Thyroid gland (tissue), 4 donors: ENCODE measurements at regions of chr2 and their contacts with region 1.

Region 1: DNA sequence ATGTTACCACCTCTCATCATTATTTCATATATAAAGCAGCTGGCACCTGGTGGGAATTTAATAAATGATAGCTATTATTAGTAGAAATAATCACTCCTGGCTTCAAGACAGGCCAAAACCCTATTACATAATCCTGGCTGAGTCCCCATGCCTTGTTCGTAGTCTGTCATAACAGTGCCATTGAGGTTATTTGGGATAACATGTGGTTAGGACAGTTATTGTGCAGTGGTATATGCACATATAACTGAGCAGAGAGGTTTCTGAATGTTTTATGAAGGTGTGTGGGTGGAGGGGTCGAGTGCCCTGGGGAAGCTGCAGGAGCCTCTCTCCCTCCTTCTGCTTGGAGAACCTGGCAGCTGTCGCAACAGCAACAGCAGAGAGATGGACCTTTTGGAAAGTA is 162.4 kb upstream of the NABP1 start:
- DNase-seq: no peak
- H3K4me3 ChIP-seq: no peak overlapping the region
- H3K27ac ChIP-seq: no peak overlapping the region
- H3K4me1 ChIP-seq: no peaks in the 10 kb centered on the region
- H3K27me3 ChIP-seq: no peaks in the 10 kb centered on the region
- CTCF ChIP-seq: no peak
- POLR2A ChIP-seq: no peak

Region 2: GRCh38 chr2:191066197-191066918 is 449.2 kb before region 1 on chr2:
- intact Hi-C with region 1: loop called (anchors 10 kb)
- DNase-seq: no peak
- H3K4me3 ChIP-seq: no peak overlapping the region
- H3K27ac ChIP-seq: no peak overlapping the region
- H3K4me1 ChIP-seq: no peaks in the 10 kb centered on the region
- H3K27me3 ChIP-seq: no peaks in the 10 kb centered on the region
- CTCF ChIP-seq: no peak
- POLR2A ChIP-seq: no peak

Region 3: GRCh38 chr2:191465766-191466420 is 49.7 kb before region 1 on chr2:
- intact Hi-C with region 1: no loop called
- DNase-seq: no peak
- H3K4me3 ChIP-seq: no peak overlapping the region
- H3K27ac ChIP-seq: peak overlapping the region in 1 of 3 donors; percentile 25
- H3K4me1 ChIP-seq: no peaks in the 10 kb centered on the region
- H3K27me3 ChIP-seq: no peaks in the 10 kb centered on the region
- CTCF ChIP-seq: no peak
- POLR2A ChIP-seq: no peak